ENCODE measurements at regions of chr5 and their contacts with region 1.

Region 1: DNA sequence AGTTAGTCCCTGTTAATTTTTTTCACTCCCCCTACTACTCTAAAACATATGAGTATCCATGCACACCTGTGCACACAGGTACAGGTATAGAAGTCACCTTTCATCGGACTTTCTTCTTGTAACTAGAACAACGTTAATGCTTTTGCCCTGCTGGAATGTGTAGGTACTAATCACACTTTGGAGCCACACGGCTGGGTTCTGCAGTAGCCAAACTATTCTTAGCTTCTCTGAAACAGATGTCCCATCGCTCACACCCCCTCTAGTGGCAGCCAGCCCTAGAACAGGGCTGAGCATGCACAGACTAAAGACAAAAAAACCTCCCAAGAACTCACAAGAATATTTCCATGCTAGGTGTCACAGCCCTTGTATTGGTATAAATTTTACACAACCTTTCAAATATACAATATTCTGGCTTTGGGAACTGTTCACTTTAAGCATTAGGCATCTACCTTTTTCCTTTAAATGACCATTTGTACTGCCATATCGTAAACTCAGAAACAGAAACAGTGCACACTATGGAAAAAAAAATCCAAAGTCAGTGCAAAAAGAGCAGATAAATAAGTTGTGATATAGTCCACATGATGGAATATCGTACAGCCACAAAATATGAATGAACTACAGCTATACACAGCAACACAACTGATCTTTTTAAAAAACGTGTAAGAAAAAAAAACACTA is 64.0 kb downstream of the RETREG1 start:
- DNase-seq: peak in 7 of 9 donors; percentile 34 to 54 (median 44)
- ATAC-seq: peak; percentile 80
- H3K4me3 ChIP-seq: no peak overlapping the region
- H3K4me3 Mint-ChIP-seq: peak overlapping the region in 2 of 10 donors; percentile 4 to 7
- H3K27ac ChIP-seq: no peak overlapping the region
- H3K27ac Mint-ChIP-seq: peak overlapping the region in 5 of 9 donors; percentile 7 to 33 (median 14)
- H3K4me1 ChIP-seq: no peaks in the 10 kb centered on the region
- H3K4me1 Mint-ChIP-seq: peaks cover 19 to 86% (median 71%) of the 10 kb centered on the region in 7 donors
- H3K27me3 ChIP-seq: no peaks in the 10 kb centered on the region
- H3K27me3 Mint-ChIP-seq: no peaks in the 10 kb centered on the region

Region 2: GRCh38 chr5:16465544-16466466 is 87.0 kb before region 1 on chr5 and contains the start of gene ZNF622:
- CTCF ChIA-PET with region 1: no interaction called
- POLR2A ChIA-PET with region 1: no interaction called
- intact Hi-C with region 1: loop called (anchors 5 kb)
- DNase-seq: peak; percentile 72 to 89 (median 86)
- ATAC-seq: peak; percentile 96
- H3K4me3 ChIP-seq: peak within 1 kb of the TSS; percentile 88
- H3K4me3 Mint-ChIP-seq: peak within 1 kb of the TSS; percentile 90 to 100 (median 97)
- H3K27ac ChIP-seq: peak within 1 kb of the TSS; percentile 87
- H3K27ac Mint-ChIP-seq: peak within 1 kb of the TSS; percentile 94 to 99 (median 97)
- H3K4me1 ChIP-seq: peaks cover 44 to 55% of the 10 kb centered on the region in 2 donors
- H3K4me1 Mint-ChIP-seq: peaks cover 61 to 98% (median 82%) of the 10 kb centered on the region in 7 donors
- H3K27me3 ChIP-seq: no peaks in the 10 kb centered on the region
- H3K27me3 Mint-ChIP-seq: no peaks in the 10 kb centered on the region
- total RNA-seq, gene ZNF622: 31.8 to 40.7 (median 36.0) TPM

Region 3: DNA sequence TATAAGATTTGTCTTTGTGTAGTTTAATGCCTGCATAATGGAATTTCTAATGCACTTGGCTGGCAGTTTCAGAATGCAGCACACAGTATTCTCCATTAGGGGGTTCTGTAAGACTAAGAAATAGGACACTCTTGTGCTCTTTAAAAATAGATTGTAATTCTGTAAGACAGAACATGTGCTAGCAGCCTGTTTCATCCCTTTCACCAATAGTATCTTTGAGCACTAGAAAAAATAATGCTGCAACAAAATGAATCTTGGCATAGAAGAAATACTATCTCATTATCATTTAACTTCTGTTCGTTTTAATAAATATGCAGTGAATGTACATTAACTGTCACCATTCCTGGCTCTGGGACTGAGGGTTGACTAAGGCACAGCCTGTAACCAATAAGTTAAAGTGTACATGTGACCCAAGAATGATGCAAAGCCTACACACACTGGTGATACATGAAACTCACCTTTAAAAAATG is 63.4 kb before region 1 on chr5:
- CTCF ChIA-PET with region 1: interaction called, 4 read pairs
- POLR2A ChIA-PET with region 1: no interaction called
- intact Hi-C with region 1: loop called in 1 of 2 experiments (anchors 1 kb)
- DNase-seq: peak in 5 of 9 donors; percentile 18 to 53 (median 46)
- ATAC-seq: peak; percentile 86
- H3K4me3 ChIP-seq: no peak overlapping the region
- H3K4me3 Mint-ChIP-seq: no peak overlapping the region
- H3K27ac ChIP-seq: no peak overlapping the region
- H3K27ac Mint-ChIP-seq: peak overlapping the region in 4 of 9 donors; percentile 1 to 60 (median 41)
- H3K4me1 ChIP-seq: no peaks in the 10 kb centered on the region
- H3K4me1 Mint-ChIP-seq: peaks cover 9 to 86% (median 71%) of the 10 kb centered on the region in 7 donors
- H3K27me3 ChIP-seq: no peaks in the 10 kb centered on the region
- H3K27me3 Mint-ChIP-seq: no peaks in the 10 kb centered on the region